B cell (primary cell): ENCODE measurements at regions of chr6 and their contacts with region 1.

Region 1: DNA sequence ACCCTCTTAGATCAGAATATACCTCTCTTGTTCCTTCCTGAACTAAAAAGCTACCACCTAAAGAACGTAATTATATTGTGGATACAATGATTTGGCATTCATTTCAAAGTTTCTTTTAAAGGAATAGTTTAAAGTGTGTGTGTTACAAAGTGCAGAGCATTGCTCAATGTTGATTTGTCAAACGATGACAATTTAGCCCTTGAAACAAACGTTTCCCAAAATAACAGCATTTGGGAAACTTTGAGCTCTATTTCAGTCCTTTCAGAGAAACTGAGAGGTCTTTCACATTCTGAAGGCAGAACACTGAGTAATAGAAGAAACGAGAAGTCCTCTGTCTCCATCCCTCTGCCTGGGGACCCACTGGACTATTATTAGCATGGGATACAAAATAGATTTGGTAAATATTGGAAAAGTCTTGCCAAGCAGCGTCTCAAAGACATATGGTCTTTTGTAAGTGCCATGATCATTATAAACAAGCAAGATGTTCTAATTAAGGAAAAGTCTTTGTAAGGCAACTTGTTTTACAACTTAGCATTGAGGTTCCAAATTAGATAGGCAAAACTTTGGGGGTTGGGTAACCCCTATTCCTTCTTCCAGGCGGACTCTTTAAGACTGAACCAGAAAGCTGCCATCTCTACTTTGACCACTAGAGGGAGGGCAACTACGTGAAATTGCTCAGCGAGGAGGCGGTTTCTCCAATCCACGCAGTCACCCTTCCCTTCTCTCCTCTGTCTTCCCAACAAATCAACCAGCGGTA is 208.8 kb downstream of the RNF144B start:
- DNase-seq: peak; percentile 54
- ATAC-seq: peak; percentile 51
- H3K4me3 ChIP-seq: no peak overlapping the region
- H3K4me3 Mint-ChIP-seq: no peak overlapping the region
- H3K27ac ChIP-seq: no peak overlapping the region
- H3K27ac Mint-ChIP-seq: no peak overlapping the region
- H3K4me1 ChIP-seq: no peaks in the 10 kb centered on the region
- H3K4me1 Mint-ChIP-seq: peaks cover 3% of the 10 kb centered on the region
- H3K27me3 ChIP-seq: peaks cover 0 to 4% (median 0%) of the 10 kb centered on the region in 4 experiments
- H3K27me3 Mint-ChIP-seq: peaks cover 23% of the 10 kb centered on the region
- CTCF ChIP-seq: peak; percentile 98

Region 2: GRCh38 chr6:18579869-18580268 is 16.1 kb before region 1 on chr6:
- CTCF ChIA-PET with region 1: interaction called, 10 read pairs
- POLR2A ChIA-PET with region 1: no interaction called
- intact Hi-C with region 1: no loop called
- DNase-seq: no peak
- ATAC-seq: no peak
- H3K4me3 ChIP-seq: no peak overlapping the region
- H3K4me3 Mint-ChIP-seq: no peak overlapping the region
- H3K27ac ChIP-seq: no peak overlapping the region
- H3K27ac Mint-ChIP-seq: no peak overlapping the region
- H3K4me1 ChIP-seq: no peaks in the 10 kb centered on the region
- H3K4me1 Mint-ChIP-seq: no peaks in the 10 kb centered on the region
- H3K27me3 ChIP-seq: peaks cover 0 to 3% (median 0%) of the 10 kb centered on the region in 4 experiments
- H3K27me3 Mint-ChIP-seq: peaks cover 29% of the 10 kb centered on the region
- CTCF ChIP-seq: no peak

Region 3: GRCh38 chr6:20126789-20127653 is 1531.1 kb after region 1 on chr6:
- CTCF ChIA-PET with region 1: interaction called, 11 read pairs
- POLR2A ChIA-PET with region 1: no interaction called
- intact Hi-C with region 1: loop called (anchors 5 kb)
- DNase-seq: peak; percentile 55
- ATAC-seq: peak; percentile 47
- H3K4me3 ChIP-seq: no peak overlapping the region
- H3K4me3 Mint-ChIP-seq: no peak overlapping the region
- H3K27ac ChIP-seq: no peak overlapping the region
- H3K27ac Mint-ChIP-seq: no peak overlapping the region
- H3K4me1 ChIP-seq: no peaks in the 10 kb centered on the region
- H3K4me1 Mint-ChIP-seq: peaks cover 3% of the 10 kb centered on the region
- H3K27me3 ChIP-seq: no peaks in the 10 kb centered on the region
- H3K27me3 Mint-ChIP-seq: no peaks in the 10 kb centered on the region
- CTCF ChIP-seq: peak; percentile 96